ENCODE measurements at regions of chr17 and their contacts with region 1.

Region 1: DNA sequence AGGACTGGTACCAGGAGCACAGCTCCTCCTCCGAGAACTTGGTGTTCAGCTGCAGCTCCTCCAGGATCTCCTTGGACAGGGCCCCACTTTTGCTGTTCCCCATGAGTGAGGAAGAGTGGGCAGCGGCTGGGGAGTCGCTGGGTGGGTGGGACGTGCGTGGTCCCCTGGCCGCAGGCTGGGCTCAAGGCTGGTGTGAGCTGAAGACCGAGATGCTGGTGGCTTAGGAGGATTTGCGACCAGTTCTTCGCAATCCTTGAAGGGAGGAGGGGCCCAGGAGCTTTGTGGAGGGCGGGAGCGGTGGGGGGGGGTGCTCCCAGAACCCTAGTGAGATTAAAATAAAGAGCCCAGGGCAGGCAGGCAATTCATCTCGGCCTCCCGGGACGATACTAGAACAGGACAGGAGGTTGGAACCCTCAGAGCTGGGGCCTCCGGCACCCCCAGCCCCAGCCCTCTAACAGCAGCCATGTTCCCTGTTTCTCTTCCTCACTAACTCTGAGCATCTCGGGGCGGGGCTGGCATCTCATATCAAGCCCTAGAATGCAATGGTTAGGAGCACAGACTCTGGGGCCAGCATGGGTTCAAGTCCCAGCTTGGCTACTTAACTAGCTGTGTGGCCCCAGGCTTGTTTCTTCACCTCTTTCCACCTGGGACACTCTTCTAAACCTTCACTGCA is at the start of gene RCVRN:
- DNase-seq: no peak
- H3K4me3 Mint-ChIP-seq: no peak within 1 kb of the TSS
- H3K27ac Mint-ChIP-seq: no peak within 1 kb of the TSS
- H3K4me1 Mint-ChIP-seq: peaks cover 9% of the 10 kb centered on the region
- H3K27me3 Mint-ChIP-seq: peaks cover 27% of the 10 kb centered on the region
- CTCF ChIP-seq: no peak
- total RNA-seq, gene RCVRN: not detected in 2 replicates

Region 2: DNA sequence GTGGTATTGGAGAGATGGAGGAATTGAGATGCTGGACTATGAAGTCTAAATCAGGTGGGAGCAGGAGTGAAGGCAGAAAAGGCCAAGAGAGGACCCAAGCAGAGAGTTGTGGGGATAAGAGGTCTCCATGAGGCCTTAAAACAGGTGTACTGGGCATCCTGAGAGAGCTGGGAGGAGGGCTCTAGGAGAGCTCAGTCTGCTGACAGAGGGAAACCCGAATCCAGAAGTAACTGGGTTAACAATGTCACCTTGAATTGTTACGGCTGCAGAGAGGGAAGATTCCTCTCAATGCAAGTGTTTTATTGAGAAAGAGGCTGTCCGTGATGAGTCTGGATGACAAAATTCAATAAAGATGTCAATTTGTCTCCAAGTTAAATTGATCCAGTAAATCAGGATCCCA is 122.2 kb before region 1 on chr17:
- CTCF ChIA-PET with region 1: no interaction called
- intact Hi-C with region 1: no loop called
- DNase-seq: no peak
- H3K4me3 Mint-ChIP-seq: no peak overlapping the region
- H3K27ac Mint-ChIP-seq: no peak overlapping the region
- H3K4me1 Mint-ChIP-seq: no peaks in the 10 kb centered on the region
- H3K27me3 Mint-ChIP-seq: peaks cover 9% of the 10 kb centered on the region
- CTCF ChIP-seq: no peak

Region 3: DNA sequence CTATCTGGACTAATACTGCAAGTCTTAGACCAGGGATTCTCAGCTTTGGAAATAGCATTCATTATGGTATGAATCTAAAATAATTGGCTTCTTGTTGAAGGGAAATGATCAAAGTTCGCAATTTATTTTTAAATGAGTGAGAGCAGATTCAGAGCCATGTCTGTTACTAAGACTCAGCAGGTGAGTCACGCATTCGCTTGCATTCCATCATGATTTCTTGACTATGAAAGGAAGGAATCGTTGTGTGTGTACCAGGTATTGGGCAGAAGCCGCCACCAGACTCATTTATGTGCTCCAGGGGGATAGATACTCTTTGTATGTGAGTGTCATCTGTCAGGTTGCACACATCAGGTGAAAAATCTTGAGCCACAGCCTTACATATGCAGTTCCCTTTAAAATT is 94.1 kb before region 1 on chr17:
- CTCF ChIA-PET with region 1: interaction called, 12 read pairs
- intact Hi-C with region 1: no loop called
- DNase-seq: peak; percentile 5
- H3K4me3 Mint-ChIP-seq: no peak overlapping the region
- H3K27ac Mint-ChIP-seq: no peak overlapping the region
- H3K4me1 Mint-ChIP-seq: peaks cover 15% of the 10 kb centered on the region
- H3K27me3 Mint-ChIP-seq: no peaks in the 10 kb centered on the region
- CTCF ChIP-seq: no peak